MCF 10A (cell line): ENCODE measurements at regions of chr1 and their contacts with region 1.

Region 1: GRCh38 chr1:209354111-209354839 is 229.2 kb upstream of the CAMK1G start:
- DNase-seq: peak; percentile 99
- H3K4me3 Mint-ChIP-seq: peak overlapping the region; percentile 7
- H3K27ac Mint-ChIP-seq: peak overlapping the region; percentile 78
- H3K4me1 Mint-ChIP-seq: peaks cover 41% of the 10 kb centered on the region
- H3K27me3 Mint-ChIP-seq: no peaks in the 10 kb centered on the region
- CTCF ChIP-seq: peak; percentile 98

Region 2: GRCh38 chr1:209229494-209230059 is 124.7 kb before region 1 on chr1:
- CTCF ChIA-PET with region 1: interaction called, 7 read pairs
- POLR2A ChIA-PET with region 1: interaction called, 23 read pairs
- intact Hi-C with region 1: no loop called
- DNase-seq: peak; percentile 87
- H3K4me3 Mint-ChIP-seq: no peak overlapping the region
- H3K27ac Mint-ChIP-seq: no peak overlapping the region
- H3K4me1 Mint-ChIP-seq: peaks cover 13% of the 10 kb centered on the region
- H3K27me3 Mint-ChIP-seq: no peaks in the 10 kb centered on the region
- CTCF ChIP-seq: no peak

Region 3: DNA sequence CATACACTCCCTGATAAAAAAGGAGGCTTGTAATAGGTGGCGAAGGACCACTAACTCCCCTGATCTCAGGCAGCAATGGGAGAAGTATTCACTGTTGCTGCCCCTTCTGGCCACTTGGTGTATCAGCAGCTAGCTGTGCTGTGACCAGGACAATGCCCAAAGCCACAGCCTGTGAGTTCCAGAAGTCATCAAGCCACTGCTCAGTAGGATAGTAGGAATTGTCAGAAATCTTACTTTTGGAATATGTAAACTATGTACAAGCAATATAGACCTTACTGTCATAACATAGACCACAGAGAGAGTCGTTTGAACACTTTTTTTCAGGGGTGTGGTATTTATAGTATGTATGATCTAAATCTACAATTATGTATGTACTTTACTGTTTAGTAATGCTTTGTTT is 19.1 kb before region 1 on chr1:
- CTCF ChIA-PET with region 1: interaction called, 106 read pairs
- POLR2A ChIA-PET with region 1: interaction called, 9 read pairs
- intact Hi-C with region 1: no loop called
- DNase-seq: peak; percentile 75
- H3K4me3 Mint-ChIP-seq: no peak overlapping the region
- H3K27ac Mint-ChIP-seq: no peak overlapping the region
- H3K4me1 Mint-ChIP-seq: peaks cover 5% of the 10 kb centered on the region
- H3K27me3 Mint-ChIP-seq: no peaks in the 10 kb centered on the region
- CTCF ChIP-seq: peak; percentile 96

Region 4: GRCh38 chr1:209398313-209398991 is 44.2 kb after region 1 on chr1:
- CTCF ChIA-PET with region 1: interaction called, 85 read pairs
- POLR2A ChIA-PET with region 1: interaction called, 6,956 read pairs
- intact Hi-C with region 1: no loop called
- DNase-seq: peak; percentile 100
- H3K4me3 Mint-ChIP-seq: peak overlapping the region; percentile 29
- H3K27ac Mint-ChIP-seq: peak overlapping the region; percentile 79
- H3K4me1 Mint-ChIP-seq: peaks cover 28% of the 10 kb centered on the region
- H3K27me3 Mint-ChIP-seq: no peaks in the 10 kb centered on the region
- CTCF ChIP-seq: no peak

Region 5: GRCh38 chr1:209443971-209444651 is 89.8 kb after region 1 on chr1:
- CTCF ChIA-PET with region 1: interaction called, 1,242 read pairs
- POLR2A ChIA-PET with region 1: interaction called, 6,956 read pairs
- intact Hi-C with region 1: no loop called
- DNase-seq: peak; percentile 54
- H3K4me3 Mint-ChIP-seq: no peak overlapping the region
- H3K27ac Mint-ChIP-seq: peak overlapping the region; percentile 17
- H3K4me1 Mint-ChIP-seq: peaks cover 24% of the 10 kb centered on the region
- H3K27me3 Mint-ChIP-seq: no peaks in the 10 kb centered on the region
- CTCF ChIP-seq: no peak